CD8-positive, alpha-beta T cell (primary cell): ENCODE measurements at regions of chr7 and their contacts with region 1.

Region 1: DNA sequence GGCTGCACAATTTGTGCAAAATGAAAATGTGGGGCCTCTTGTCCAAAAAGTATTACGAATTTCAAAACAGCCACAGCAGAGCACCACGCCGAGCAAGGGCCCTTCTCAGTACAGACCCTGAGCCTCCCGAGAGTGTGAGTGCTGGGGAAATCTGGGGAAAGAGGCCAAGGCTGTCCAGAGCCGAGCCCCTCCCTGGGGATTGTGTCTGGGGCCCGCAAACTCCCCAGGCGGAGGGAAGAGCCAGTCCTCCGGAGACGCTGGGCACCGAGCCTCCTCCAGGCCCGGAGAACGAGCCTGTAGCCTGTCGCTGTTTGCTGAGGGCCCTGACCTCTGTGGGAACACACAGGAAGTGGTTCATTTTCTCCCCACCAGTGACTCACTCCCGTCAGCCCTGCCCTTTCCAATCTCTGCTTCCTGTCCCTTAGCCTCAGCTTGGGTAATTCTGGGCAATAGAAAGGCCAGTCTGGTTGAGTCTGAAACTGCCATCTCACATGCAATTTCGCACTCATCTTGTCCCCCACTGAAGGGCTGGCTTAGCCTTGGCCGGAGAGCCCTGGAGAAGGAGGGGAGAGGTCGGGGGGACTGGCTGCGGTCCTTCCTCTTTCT is 19.5 kb upstream of the GNA12 start:
- DNase-seq: peak; percentile 21 to 89 (median 66)
- ATAC-seq: peak; percentile 74
- H3K4me3 ChIP-seq: peak overlapping the region in 1 of 2 experiments; percentile 32
- H3K4me3 Mint-ChIP-seq: peak overlapping the region; percentile 64
- H3K27ac ChIP-seq: peak overlapping the region in 1 of 2 experiments; percentile 70
- H3K27ac Mint-ChIP-seq: peak overlapping the region; percentile 96
- H3K4me1 ChIP-seq: peaks cover 26% of the 10 kb centered on the region
- H3K4me1 Mint-ChIP-seq: peaks cover 27% of the 10 kb centered on the region
- H3K27me3 ChIP-seq: peaks cover 0 to 3% of the 10 kb centered on the region in 2 experiments
- H3K27me3 Mint-ChIP-seq: no peaks in the 10 kb centered on the region
- CTCF ChIP-seq: no peak

Region 2: GRCh38 chr7:2608921-2609411 is 254.6 kb before region 1 on chr7:
- CTCF ChIA-PET with region 1: no interaction called
- POLR2A ChIA-PET with region 1: no interaction called
- intact Hi-C with region 1: no loop called
- DNase-seq: peak in 4 of 9 experiments; percentile 16 to 51 (median 24)
- ATAC-seq: peak; percentile 73
- H3K4me3 ChIP-seq: no peak overlapping the region
- H3K4me3 Mint-ChIP-seq: peak overlapping the region; percentile 54
- H3K27ac ChIP-seq: no peak overlapping the region
- H3K27ac Mint-ChIP-seq: no peak overlapping the region
- H3K4me1 ChIP-seq: peaks cover 4% of the 10 kb centered on the region
- H3K4me1 Mint-ChIP-seq: peaks cover 11% of the 10 kb centered on the region
- H3K27me3 ChIP-seq: no peaks in the 10 kb centered on the region
- H3K27me3 Mint-ChIP-seq: no peaks in the 10 kb centered on the region
- CTCF ChIP-seq: peak; percentile 37

Region 3: DNA sequence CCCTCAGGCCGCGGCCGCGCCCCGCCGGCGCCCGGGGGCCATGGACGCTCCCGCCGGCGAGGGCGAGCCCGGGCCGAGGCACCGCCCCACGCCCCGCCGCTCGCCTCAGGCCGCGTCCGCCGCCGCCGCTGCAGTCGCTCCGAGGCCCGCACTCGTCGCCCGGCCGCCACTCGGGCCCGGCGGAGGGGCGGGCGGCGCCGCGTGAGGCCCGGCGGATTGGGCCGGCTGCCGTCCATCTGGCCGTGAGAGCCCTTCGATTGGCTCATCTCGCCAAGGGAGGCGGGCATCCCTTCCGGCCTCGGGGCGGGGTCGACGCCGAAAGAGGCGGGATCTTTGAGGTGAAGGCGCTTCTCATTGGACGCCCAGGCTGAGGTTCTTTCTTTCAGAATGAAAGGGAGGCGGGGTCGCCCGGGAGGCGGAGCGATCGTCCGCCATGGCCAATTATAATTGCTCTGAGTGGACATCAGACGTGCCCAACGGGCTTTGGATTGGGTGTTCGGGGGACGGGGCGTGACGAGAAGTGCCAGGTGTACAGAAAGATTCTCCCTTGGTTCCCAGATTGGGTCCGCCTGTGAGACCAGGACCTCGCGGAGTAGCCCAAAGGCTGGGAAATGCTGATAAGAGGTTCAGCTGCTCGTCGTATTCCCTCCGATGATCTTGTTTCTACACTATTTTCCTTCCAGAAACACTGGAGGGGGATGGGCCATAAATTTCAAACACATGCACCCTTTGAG is 19.2 kb before region 1 on chr7 and contains the start of gene GNA12:
- CTCF ChIA-PET with region 1: interaction called, 17 read pairs
- POLR2A ChIA-PET with region 1: no interaction called
- intact Hi-C with region 1: loop called in 1 of 2 experiments (anchors 2 kb)
- DNase-seq: peak; percentile 96 to 99 (median 98)
- ATAC-seq: peak; percentile 94
- H3K4me3 ChIP-seq: peak within 1 kb of the TSS; percentile 51 to 58
- H3K4me3 Mint-ChIP-seq: peak within 1 kb of the TSS; percentile 93
- H3K27ac ChIP-seq: peak within 1 kb of the TSS in 1 of 2 experiments; percentile 22
- H3K27ac Mint-ChIP-seq: peak within 1 kb of the TSS; percentile 81
- H3K4me1 ChIP-seq: peaks cover 21% of the 10 kb centered on the region
- H3K4me1 Mint-ChIP-seq: peaks cover 44% of the 10 kb centered on the region
- H3K27me3 ChIP-seq: no peaks in the 10 kb centered on the region
- H3K27me3 Mint-ChIP-seq: no peaks in the 10 kb centered on the region
- CTCF ChIP-seq: no peak
- total RNA-seq, gene GNA12: 17.0 to 17.7 TPM

Region 4: DNA sequence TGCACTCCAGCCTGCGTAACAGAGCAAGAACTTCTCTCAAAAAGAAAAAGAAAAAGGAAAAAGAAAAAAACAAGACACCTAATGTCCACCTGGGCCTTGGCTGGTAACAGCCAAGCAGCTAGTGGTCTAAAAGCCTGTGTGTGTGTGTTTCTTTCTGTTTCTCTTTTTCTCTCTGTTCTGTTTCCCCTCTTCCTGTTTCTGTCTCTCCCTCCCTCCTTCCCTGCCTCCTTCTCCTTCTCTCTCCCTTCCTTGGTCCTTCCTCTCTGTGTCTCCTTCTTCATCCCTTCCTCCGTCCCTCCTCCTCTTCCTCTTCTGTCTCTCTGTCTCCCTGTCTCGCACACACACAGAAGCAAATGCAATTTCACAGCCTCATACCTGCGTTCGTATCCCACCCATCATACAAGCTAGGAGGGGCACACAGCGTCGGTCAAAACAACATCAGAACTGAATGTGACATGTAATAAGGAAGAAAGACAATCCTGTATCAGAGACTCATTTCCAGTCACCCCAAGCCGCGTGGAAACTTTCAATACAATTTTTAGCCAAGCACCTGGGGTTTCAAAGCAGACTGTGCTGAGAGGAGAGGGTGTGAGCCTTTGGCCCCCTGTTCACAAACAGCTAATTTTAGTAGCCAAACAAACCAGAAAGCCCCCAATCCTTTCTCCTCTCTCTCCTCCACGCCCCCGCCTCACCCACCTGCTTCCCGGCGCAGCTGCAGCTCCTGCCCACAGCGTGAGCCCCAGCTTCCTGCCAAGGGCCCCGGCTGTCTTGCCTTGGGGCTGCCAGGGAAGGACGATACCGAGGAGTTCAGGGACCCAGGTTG is 30.8 kb after region 1 on chr7:
- CTCF ChIA-PET with region 1: interaction called, 11 read pairs
- POLR2A ChIA-PET with region 1: no interaction called
- intact Hi-C with region 1: no loop called
- DNase-seq: peak in 8 of 9 experiments; percentile 16 to 77 (median 50)
- ATAC-seq: peak; percentile 73
- H3K4me3 ChIP-seq: peak overlapping the region; percentile 49
- H3K4me3 Mint-ChIP-seq: peak overlapping the region; percentile 86
- H3K27ac ChIP-seq: peak overlapping the region in 1 of 2 experiments; percentile 28
- H3K27ac Mint-ChIP-seq: peak overlapping the region; percentile 87
- H3K4me1 ChIP-seq: peaks cover 13% of the 10 kb centered on the region
- H3K4me1 Mint-ChIP-seq: peaks cover 24% of the 10 kb centered on the region
- H3K27me3 ChIP-seq: no peaks in the 10 kb centered on the region
- H3K27me3 Mint-ChIP-seq: no peaks in the 10 kb centered on the region
- CTCF ChIP-seq: no peak

Region 5: GRCh38 chr7:3092468-3092867 is 228.9 kb after region 1 on chr7:
- CTCF ChIA-PET with region 1: interaction called, 12 read pairs
- POLR2A ChIA-PET with region 1: no interaction called
- intact Hi-C with region 1: no loop called
- DNase-seq: peak; percentile 33 to 94 (median 73)
- ATAC-seq: peak; percentile 82
- H3K4me3 ChIP-seq: peak overlapping the region; percentile 15 to 31
- H3K4me3 Mint-ChIP-seq: peak overlapping the region; percentile 55
- H3K27ac ChIP-seq: peak overlapping the region; percentile 56 to 96
- H3K27ac Mint-ChIP-seq: peak overlapping the region; percentile 96
- H3K4me1 ChIP-seq: peaks cover 74% of the 10 kb centered on the region
- H3K4me1 Mint-ChIP-seq: peaks cover 74% of the 10 kb centered on the region
- H3K27me3 ChIP-seq: no peaks in the 10 kb centered on the region
- H3K27me3 Mint-ChIP-seq: no peaks in the 10 kb centered on the region
- CTCF ChIP-seq: no peak

Region 6: DNA sequence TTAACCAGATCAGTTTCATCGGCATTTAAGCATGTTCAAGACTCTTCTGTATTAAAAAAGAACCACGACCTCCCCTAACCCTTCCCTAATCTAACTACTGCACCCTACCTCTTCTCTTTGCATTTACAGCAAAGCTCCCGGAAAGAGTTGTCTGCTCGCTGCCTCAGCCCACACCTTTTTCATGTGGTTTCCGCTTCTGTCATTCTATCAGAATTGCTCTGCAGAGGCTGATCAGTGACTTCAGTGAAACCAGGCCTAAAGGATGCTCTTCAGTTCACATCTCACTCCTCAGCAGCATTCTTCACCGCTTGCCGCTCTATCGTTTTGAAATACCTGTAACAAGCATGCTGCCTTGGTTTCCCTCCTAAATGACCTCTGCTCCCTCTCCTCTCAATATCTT is 598.4 kb after region 1 on chr7:
- CTCF ChIA-PET with region 1: no interaction called
- POLR2A ChIA-PET with region 1: no interaction called
- intact Hi-C with region 1: loop called in 1 of 2 experiments (anchors 10 kb)
- DNase-seq: peak; percentile 28 to 89 (median 64)
- ATAC-seq: peak; percentile 85
- H3K4me3 ChIP-seq: no peak overlapping the region
- H3K4me3 Mint-ChIP-seq: peak overlapping the region; percentile 74
- H3K27ac ChIP-seq: peak overlapping the region; percentile 2 to 21
- H3K27ac Mint-ChIP-seq: peak overlapping the region; percentile 92
- H3K4me1 ChIP-seq: peaks cover 51% of the 10 kb centered on the region
- H3K4me1 Mint-ChIP-seq: peaks cover 46% of the 10 kb centered on the region
- H3K27me3 ChIP-seq: no peaks in the 10 kb centered on the region
- H3K27me3 Mint-ChIP-seq: no peaks in the 10 kb centered on the region
- CTCF ChIP-seq: no peak

Region 7: GRCh38 chr7:4753711-4754432 is 1890.3 kb after region 1 on chr7:
- CTCF ChIA-PET with region 1: no interaction called
- POLR2A ChIA-PET with region 1: no interaction called
- intact Hi-C with region 1: loop called in 1 of 2 experiments (anchors 10 kb)
- DNase-seq: peak; percentile 69 to 95 (median 86)
- ATAC-seq: peak; percentile 98
- H3K4me3 ChIP-seq: no peak overlapping the region
- H3K4me3 Mint-ChIP-seq: no peak overlapping the region
- H3K27ac ChIP-seq: no peak overlapping the region
- H3K27ac Mint-ChIP-seq: no peak overlapping the region
- H3K4me1 ChIP-seq: peaks cover 19% of the 10 kb centered on the region
- H3K4me1 Mint-ChIP-seq: peaks cover 17% of the 10 kb centered on the region
- H3K27me3 ChIP-seq: no peaks in the 10 kb centered on the region
- H3K27me3 Mint-ChIP-seq: no peaks in the 10 kb centered on the region
- CTCF ChIP-seq: peak; percentile 83